Tibial artery (tissue), 4 donors: ENCODE measurements at regions of chr7 and their contacts with region 1.

Region 1: GRCh38 chr7:38107486-38107893 is 70.6 kb upstream of the STARD3NL start:
- DNase-seq: peak; percentile 55 to 67
- H3K4me3 ChIP-seq: no peak overlapping the region
- H3K27ac ChIP-seq: no peak overlapping the region
- H3K4me1 ChIP-seq: peaks cover 0 to 8% (median 0%) of the 10 kb centered on the region in 4 donors
- H3K27me3 ChIP-seq: no peaks in the 10 kb centered on the region
- CTCF ChIP-seq: peak; percentile 58 to 67

Region 2: GRCh38 chr7:37901236-37901827 is 206.2 kb before region 1 on chr7:
- intact Hi-C with region 1: loop called (anchors 5 kb)
- DNase-seq: no peak
- H3K4me3 ChIP-seq: no peak overlapping the region
- H3K27ac ChIP-seq: no peak overlapping the region
- H3K4me1 ChIP-seq: peaks cover 0 to 10% (median 7%) of the 10 kb centered on the region in 4 donors
- H3K27me3 ChIP-seq: no peaks in the 10 kb centered on the region
- CTCF ChIP-seq: peak; percentile 58 to 75